ENCODE measurements at regions of chr9 and their contacts with region 1.

Region 1: DNA sequence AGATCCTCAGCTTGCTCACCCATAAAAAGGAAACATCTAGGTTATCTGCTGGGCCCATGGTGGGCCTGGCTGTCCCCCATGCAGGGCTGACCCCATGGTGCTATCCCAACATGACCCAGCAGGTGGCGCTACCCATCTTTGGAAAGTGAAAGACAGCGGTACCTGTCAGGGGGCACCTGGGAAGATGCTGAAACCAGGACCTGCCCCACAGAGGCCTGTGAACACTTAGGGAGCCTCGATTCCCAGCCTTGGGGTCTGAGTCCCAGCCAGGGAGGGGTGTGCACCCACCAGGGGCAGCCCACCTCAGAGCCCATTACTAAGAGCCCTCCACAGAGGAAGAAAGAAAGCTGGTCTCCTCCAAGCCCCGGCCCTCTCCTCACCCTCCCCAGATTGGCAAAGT is 46.6 kb upstream of the IPPK start:
- DNase-seq: peak; percentile 48 to 78 (median 77)
- H3K4me3 ChIP-seq: no peak overlapping the region
- H3K27ac ChIP-seq: peak overlapping the region in 1 of 2 donors; percentile 73
- H3K4me1 ChIP-seq: peaks cover 6% of the 10 kb centered on the region
- H3K27me3 ChIP-seq: no peaks in the 10 kb centered on the region
- CTCF ChIP-seq: peak; percentile 67 to 77 (median 70)
- EP300 ChIP-seq: no peak
- POLR2A ChIP-seq: no peak

Region 2: DNA sequence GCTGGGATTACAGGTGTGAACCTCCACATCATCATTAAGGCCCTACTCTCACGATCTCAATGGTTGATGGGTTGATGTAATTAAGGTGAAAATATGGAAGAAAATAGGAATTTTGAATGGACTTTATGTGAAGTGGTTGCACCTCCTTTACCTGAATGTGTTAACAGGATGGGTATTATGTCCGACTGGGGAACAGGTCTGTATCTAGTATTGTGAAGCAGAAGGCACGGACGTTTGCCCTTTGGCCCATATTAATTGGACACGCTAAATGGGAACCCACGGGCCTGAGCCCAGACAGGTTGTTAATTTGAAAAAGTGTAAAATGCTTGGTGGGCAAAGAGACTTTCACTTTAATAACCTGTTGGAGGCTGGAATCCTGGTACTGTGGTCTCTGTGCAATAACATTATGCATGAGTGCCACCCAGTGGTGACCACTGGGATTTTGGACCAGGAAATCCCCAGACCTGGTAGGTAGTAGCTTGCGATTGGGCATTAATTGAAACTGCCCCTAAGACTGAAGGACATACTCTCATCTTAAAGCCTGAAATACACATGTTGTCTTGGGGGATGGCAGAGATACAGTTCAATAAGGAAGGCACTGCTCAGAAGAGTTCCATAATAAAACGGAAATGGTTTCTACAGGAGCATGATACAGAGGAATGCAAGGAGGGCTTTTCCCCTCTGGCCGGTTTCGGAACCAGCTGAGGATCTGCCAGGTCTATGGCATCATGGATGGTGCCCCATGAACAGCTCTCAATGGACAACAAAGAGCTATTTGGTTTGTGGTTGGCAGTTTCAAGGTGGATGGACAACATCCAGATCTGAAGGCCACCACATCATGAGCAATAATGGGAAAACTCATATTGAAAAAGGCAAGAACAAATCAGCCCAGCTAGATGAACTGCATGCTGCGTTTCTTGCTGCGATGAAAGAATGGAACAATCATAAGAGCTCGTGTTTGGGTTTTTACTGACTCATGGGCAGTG is 74.3 kb after region 1 on chr9:
- intact Hi-C with region 1: loop called in 3 of 4 experiments (anchors 2 to 10 kb)
- DNase-seq: peak; percentile 69 to 86 (median 81)
- H3K4me3 ChIP-seq: no peak overlapping the region
- H3K27ac ChIP-seq: no peak overlapping the region
- H3K4me1 ChIP-seq: no peaks in the 10 kb centered on the region
- H3K27me3 ChIP-seq: no peaks in the 10 kb centered on the region
- CTCF ChIP-seq: peak; percentile 37 to 88 (median 80)
- EP300 ChIP-seq: no peak
- POLR2A ChIP-seq: no peak

Measured in ovary (tissue), 10 donors.